HEK293 (cell line): ENCODE measurements at regions of chr18 and their contacts with region 1.

Region 1: DNA sequence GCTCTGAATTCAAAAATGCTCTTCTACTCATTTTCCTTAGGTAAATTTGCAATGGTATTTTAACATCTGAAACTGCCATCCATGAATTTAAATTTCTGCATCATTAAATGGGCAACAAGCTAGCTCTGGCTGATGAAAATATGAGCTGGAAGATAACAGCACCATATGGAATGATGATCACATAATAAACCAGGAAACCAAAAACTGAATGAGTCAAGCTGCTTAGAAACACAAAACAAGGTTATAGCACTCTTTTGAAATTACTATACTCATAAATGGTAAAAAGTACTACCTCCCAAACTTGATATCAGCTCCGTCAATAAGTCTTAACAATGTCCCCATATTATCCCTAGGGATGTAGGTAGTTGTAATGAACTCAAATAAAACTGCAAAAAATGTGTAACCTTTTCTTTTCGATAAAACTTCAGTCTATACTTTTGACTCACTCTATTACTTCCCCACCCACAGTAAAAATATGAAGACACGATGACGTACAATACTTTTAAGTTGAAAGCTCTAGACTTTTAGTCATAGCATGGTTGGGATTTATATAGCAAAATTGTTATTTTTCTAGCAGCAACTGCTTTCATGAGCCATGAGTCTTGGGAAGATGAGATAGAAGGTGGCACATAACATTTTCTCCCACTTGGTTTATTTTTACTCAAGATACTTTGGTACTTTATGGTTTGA is 396.7 kb downstream of the CDH2 start:
- H3K4me3 ChIP-seq: no peak overlapping the region
- H3K27ac ChIP-seq: no peak overlapping the region
- H3K4me1 ChIP-seq: no peaks in the 10 kb centered on the region
- CTCF ChIP-seq: no peak

Region 2: GRCh38 chr18:27363872-27364271 is 416.3 kb before region 1 on chr18:
- CTCF ChIA-PET with region 1: no interaction called
- POLR2A ChIA-PET with region 1: no interaction called
- H3K4me3 ChIP-seq: no peak overlapping the region
- H3K27ac ChIP-seq: no peak overlapping the region
- H3K4me1 ChIP-seq: no peaks in the 10 kb centered on the region
- CTCF ChIP-seq: no peak

Region 3: GRCh38 chr18:27797484-27797883 is 17.3 kb after region 1 on chr18:
- CTCF ChIA-PET with region 1: no interaction called
- POLR2A ChIA-PET with region 1: no interaction called
- H3K4me3 ChIP-seq: no peak overlapping the region
- H3K27ac ChIP-seq: no peak overlapping the region
- H3K4me1 ChIP-seq: no peaks in the 10 kb centered on the region
- CTCF ChIP-seq: no peak

Region 4: GRCh38 chr18:28043631-28044030 is 263.4 kb after region 1 on chr18:
- CTCF ChIA-PET with region 1: no interaction called
- POLR2A ChIA-PET with region 1: interaction called, 10 read pairs
- H3K4me3 ChIP-seq: no peak overlapping the region
- H3K27ac ChIP-seq: no peak overlapping the region
- H3K4me1 ChIP-seq: peaks cover 11% of the 10 kb centered on the region
- CTCF ChIP-seq: no peak